CD14-positive monocyte (primary cell): ENCODE measurements at regions of chr7 and their contacts with region 1.

Region 1: GRCh38 chr7:64562626-64563275 is at the start of gene ZNF680:
- DNase-seq: peak; percentile 54 to 71 (median 65)
- H3K4me3 ChIP-seq: peak within 1 kb of the TSS; percentile 61 to 92 (median 66)
- H3K4me3 Mint-ChIP-seq: peak within 1 kb of the TSS; percentile 100
- H3K27ac ChIP-seq: peak within 1 kb of the TSS; percentile 46 to 82
- H3K27ac Mint-ChIP-seq: peak within 1 kb of the TSS; percentile 92 to 96 (median 95)
- H3K4me1 ChIP-seq: peaks cover 0 to 6% of the 10 kb centered on the region in 2 donors
- H3K4me1 Mint-ChIP-seq: peaks cover 11% of the 10 kb centered on the region
- H3K27me3 ChIP-seq: no peaks in the 10 kb centered on the region
- H3K27me3 Mint-ChIP-seq: peaks cover 2 to 5% (median 4%) of the 10 kb centered on the region in 3 donors
- CTCF ChIP-seq: no peak
- polyA plus RNA-seq, gene ZNF680: 0.69 to 1.6 (median 1.5) TPM

Region 2: GRCh38 chr7:63925623-63926460 is 636.9 kb before region 1 on chr7:
- intact Hi-C with region 1: loop called in 1 of 2 experiments (anchors 5 kb)
- DNase-seq: peak; percentile 78 to 88 (median 88)
- H3K4me3 ChIP-seq: peak overlapping the region; percentile 53 to 82 (median 82)
- H3K4me3 Mint-ChIP-seq: peak overlapping the region; percentile 92 to 93
- H3K27ac ChIP-seq: peak overlapping the region; percentile 65 to 84
- H3K27ac Mint-ChIP-seq: peak overlapping the region; percentile 84 to 97 (median 91)
- H3K4me1 ChIP-seq: peaks cover 13 to 21% of the 10 kb centered on the region in 2 donors
- H3K4me1 Mint-ChIP-seq: peaks cover 20% of the 10 kb centered on the region
- H3K27me3 ChIP-seq: no peaks in the 10 kb centered on the region
- H3K27me3 Mint-ChIP-seq: peaks cover 0 to 3% (median 2%) of the 10 kb centered on the region in 3 donors
- CTCF ChIP-seq: no peak

Region 3: GRCh38 chr7:64463636-64464378 is 98.9 kb before region 1 on chr7:
- intact Hi-C with region 1: no loop called
- DNase-seq: peak in 2 of 3 donors; percentile 0 to 17
- H3K4me3 ChIP-seq: peak overlapping the region in 2 of 3 experiments; percentile 3 to 61
- H3K4me3 Mint-ChIP-seq: peak overlapping the region; percentile 73 to 89
- H3K27ac ChIP-seq: no peak overlapping the region
- H3K27ac Mint-ChIP-seq: peak overlapping the region in 1 of 7 donors; percentile 68
- H3K4me1 ChIP-seq: no peaks in the 10 kb centered on the region
- H3K4me1 Mint-ChIP-seq: peaks cover 5% of the 10 kb centered on the region
- H3K27me3 ChIP-seq: no peaks in the 10 kb centered on the region
- H3K27me3 Mint-ChIP-seq: peaks cover 0 to 1% (median 0%) of the 10 kb centered on the region in 3 donors
- CTCF ChIP-seq: no peak

Region 4: GRCh38 chr7:64665980-64666662 is 103.4 kb after region 1 on chr7 and contains the start of gene ZNF107:
- intact Hi-C with region 1: loop called in 1 of 2 experiments (anchors 5 kb)
- DNase-seq: peak; percentile 55 to 75 (median 56)
- H3K4me3 ChIP-seq: peak within 1 kb of the TSS; percentile 76 to 93 (median 90)
- H3K4me3 Mint-ChIP-seq: peak within 1 kb of the TSS; percentile 96 to 98
- H3K27ac ChIP-seq: peak within 1 kb of the TSS; percentile 76 to 77
- H3K27ac Mint-ChIP-seq: peak within 1 kb of the TSS; percentile 86 to 95 (median 91)
- H3K4me1 ChIP-seq: peaks cover 12% of the 10 kb centered on the region in 2 donors
- H3K4me1 Mint-ChIP-seq: peaks cover 17% of the 10 kb centered on the region
- H3K27me3 ChIP-seq: no peaks in the 10 kb centered on the region
- H3K27me3 Mint-ChIP-seq: peaks cover 0 to 1% (median 0%) of the 10 kb centered on the region in 3 donors
- CTCF ChIP-seq: no peak
- polyA plus RNA-seq, gene ZNF107: 0.44 to 0.89 (median 0.65) TPM

Region 5: DNA sequence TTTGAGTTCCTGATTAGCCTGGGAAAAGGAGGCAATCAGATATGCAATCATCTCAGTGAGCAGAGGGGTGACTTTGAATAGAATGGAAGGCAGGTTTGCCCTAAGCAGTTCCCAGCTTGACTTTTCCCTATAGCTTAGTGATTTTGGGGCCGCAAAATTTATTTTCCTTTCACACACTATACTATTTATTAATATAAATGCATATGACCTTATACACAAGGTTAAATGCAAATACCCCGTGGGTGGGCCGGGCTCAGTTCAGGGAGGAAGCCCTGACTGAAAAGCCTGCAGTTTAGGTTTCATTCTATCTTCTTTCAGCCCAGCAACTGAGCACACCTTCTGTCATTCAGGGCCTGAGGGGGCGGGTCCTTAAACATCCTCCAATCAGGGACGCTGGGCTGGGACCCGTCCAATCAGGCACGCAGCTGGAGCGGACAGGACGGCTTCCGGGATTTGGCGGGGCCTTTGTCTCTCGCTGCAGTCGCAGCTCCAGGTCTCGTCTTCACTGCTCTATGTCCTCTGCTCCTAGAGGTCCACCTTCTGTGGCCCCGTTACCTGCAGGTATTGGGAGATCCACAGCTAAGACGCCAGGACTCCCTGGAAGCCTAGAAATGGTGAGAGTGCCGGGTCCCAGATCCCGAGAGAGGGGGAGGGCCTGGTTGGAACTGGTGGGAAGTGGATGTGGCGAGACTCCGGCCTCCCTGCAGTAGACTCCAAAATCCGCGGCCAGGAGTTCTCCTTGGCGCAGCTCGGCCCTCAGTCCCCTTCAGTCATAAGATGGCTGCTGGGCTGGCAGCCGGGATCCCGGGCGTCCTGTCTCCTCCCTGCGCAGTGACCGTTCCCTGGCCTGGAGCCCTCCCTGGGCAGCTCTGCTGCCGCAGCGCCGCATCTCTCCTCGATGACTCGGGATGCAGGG is 340.3 kb after region 1 on chr7 and contains the start of gene ZNF273:
- intact Hi-C with region 1: loop called in 1 of 2 experiments (anchors 10 kb)
- DNase-seq: peak; percentile 41 to 72 (median 69)
- H3K4me3 ChIP-seq: peak within 1 kb of the TSS; percentile 61 to 87 (median 85)
- H3K4me3 Mint-ChIP-seq: peak within 1 kb of the TSS; percentile 97 to 99
- H3K27ac ChIP-seq: peak within 1 kb of the TSS; percentile 72 to 80
- H3K27ac Mint-ChIP-seq: peak within 1 kb of the TSS; percentile 90 to 96 (median 93)
- H3K4me1 ChIP-seq: peaks cover 9 to 13% of the 10 kb centered on the region in 2 donors
- H3K4me1 Mint-ChIP-seq: peaks cover 35% of the 10 kb centered on the region
- H3K27me3 ChIP-seq: no peaks in the 10 kb centered on the region
- H3K27me3 Mint-ChIP-seq: peaks cover 1 to 3% (median 1%) of the 10 kb centered on the region in 3 donors
- CTCF ChIP-seq: no peak
- polyA plus RNA-seq, gene ZNF273: 0.21 to 1.7 (median 0.62) TPM